ENCODE measurements at regions of chr1 and their contacts with region 1.

Region 1: GRCh38 chr1:31955917-31956736 is 18.0 kb upstream of the PTP4A2 start:
- DNase-seq: peak; percentile 44
- ATAC-seq: peak; percentile 39
- H3K4me3 ChIP-seq: no peak overlapping the region
- H3K27ac ChIP-seq: peak overlapping the region; percentile 51
- H3K4me1 ChIP-seq: peaks cover 23 to 33% of the 10 kb centered on the region in 2 experiments
- H3K27me3 ChIP-seq: no peaks in the 10 kb centered on the region
- CTCF ChIP-seq: no peak
- POLR2A ChIP-seq: no peak
- RAD21 ChIP-seq: peak; percentile 45

Region 2: GRCh38 chr1:31663622-31664452 is 292.3 kb before region 1 on chr1:
- CTCF ChIA-PET with region 1: no interaction called
- POLR2A ChIA-PET with region 1: no interaction called
- RAD21 ChIA-PET with region 1: no interaction called
- intact Hi-C with region 1: loop called (anchors 10 kb)
- DNase-seq: peak; percentile 13
- ATAC-seq: peak; percentile 79
- H3K4me3 ChIP-seq: no peak overlapping the region
- H3K27ac ChIP-seq: no peak overlapping the region
- H3K4me1 ChIP-seq: peaks cover 9 to 12% of the 10 kb centered on the region in 2 experiments
- H3K27me3 ChIP-seq: no peaks in the 10 kb centered on the region
- CTCF ChIP-seq: peak; percentile 90 to 95 (median 93)
- POLR2A ChIP-seq: no peak
- RAD21 ChIP-seq: peak; percentile 98

Region 3: GRCh38 chr1:31904339-31905092 is 51.6 kb before region 1 on chr1:
- CTCF ChIA-PET with region 1: no interaction called
- POLR2A ChIA-PET with region 1: no interaction called
- RAD21 ChIA-PET with region 1: no interaction called
- intact Hi-C with region 1: loop called (anchors 5 kb)
- DNase-seq: no peak
- ATAC-seq: peak; percentile 8; the same call in 1 of the 2 replicates
- H3K4me3 ChIP-seq: no peak overlapping the region
- H3K27ac ChIP-seq: no peak overlapping the region
- H3K4me1 ChIP-seq: no peaks in the 10 kb centered on the region
- H3K27me3 ChIP-seq: no peaks in the 10 kb centered on the region
- CTCF ChIP-seq: no peak
- POLR2A ChIP-seq: no peak
- RAD21 ChIP-seq: no peak

Region 4: GRCh38 chr1:31923901-31924535 is 32.1 kb before region 1 on chr1:
- CTCF ChIA-PET with region 1: no interaction called
- POLR2A ChIA-PET with region 1: no interaction called
- RAD21 ChIA-PET with region 1: no interaction called
- intact Hi-C with region 1: loop called (anchors 5 kb)
- DNase-seq: no peak
- ATAC-seq: no peak
- H3K4me3 ChIP-seq: no peak overlapping the region
- H3K27ac ChIP-seq: no peak overlapping the region; the same call in 1 of the 2 replicates
- H3K4me1 ChIP-seq: peaks cover 47 to 67% of the 10 kb centered on the region in 2 experiments
- H3K27me3 ChIP-seq: no peaks in the 10 kb centered on the region
- CTCF ChIP-seq: no peak
- POLR2A ChIP-seq: no peak
- RAD21 ChIP-seq: no peak

Region 5: GRCh38 chr1:31938174-31938950 is 17.8 kb before region 1 on chr1 and contains the start of gene PTP4A2:
- CTCF ChIA-PET with region 1: interaction called, 7 read pairs
- POLR2A ChIA-PET with region 1: interaction called, 41 read pairs
- RAD21 ChIA-PET with region 1: no interaction called
- intact Hi-C with region 1: no loop called
- DNase-seq: peak; percentile 96
- ATAC-seq: peak; percentile 82
- H3K4me3 ChIP-seq: peak within 1 kb of the TSS; percentile 92 to 97
- H3K27ac ChIP-seq: peak within 1 kb of the TSS; percentile 95
- H3K4me1 ChIP-seq: peaks cover 62 to 83% of the 10 kb centered on the region in 2 experiments
- H3K27me3 ChIP-seq: no peaks in the 10 kb centered on the region
- CTCF ChIP-seq: peak in 1 of 3 experiments; percentile 40; a peak in 3 of 6 replicates
- POLR2A ChIP-seq: peak; percentile 83
- RAD21 ChIP-seq: no peak
- total RNA-seq, gene PTP4A2: 267 TPM

Region 6: DNA sequence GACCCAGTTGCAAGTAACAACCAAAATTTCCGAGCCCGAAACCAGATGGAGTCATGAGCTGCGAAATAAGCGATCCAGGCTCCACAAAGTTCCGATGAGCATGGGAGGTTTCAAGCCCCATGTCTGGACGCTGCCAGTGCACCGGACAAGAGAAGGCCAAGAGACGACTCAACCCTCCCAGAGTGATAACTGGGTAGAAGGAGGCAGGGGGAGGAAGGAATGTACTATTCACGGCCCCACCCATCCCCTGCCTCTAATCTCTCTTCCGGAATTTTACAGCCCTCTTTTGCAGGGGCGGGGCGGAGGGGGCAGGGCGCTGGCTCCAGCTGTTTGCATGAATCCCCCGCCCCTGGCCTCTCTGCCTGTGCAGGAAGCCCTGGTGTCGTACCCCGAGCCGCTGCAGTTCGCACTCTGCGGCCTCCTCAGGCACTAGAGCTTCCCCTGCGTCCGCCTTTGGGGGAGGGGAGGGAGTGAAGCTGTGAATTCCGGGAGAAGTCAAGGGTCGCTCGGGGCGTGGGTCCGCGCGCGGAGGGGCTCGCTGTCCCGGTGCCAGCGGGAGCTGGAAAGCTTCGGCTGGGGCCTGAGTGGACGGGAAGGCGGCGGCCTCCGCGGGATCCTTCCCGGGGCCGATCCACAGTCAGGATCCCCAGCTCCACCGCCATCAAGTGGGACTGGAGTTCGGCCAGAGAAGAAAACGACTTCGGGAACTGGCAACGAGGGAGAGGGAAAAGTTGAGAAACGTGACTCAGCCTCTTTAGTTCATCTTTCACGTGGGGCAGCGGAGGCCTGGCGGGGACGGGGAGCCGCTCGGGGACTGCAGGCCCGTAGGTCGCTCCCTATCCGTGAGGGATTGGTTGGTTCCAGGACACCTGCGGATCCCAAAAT is 11.7 kb before region 1 on chr1:
- CTCF ChIA-PET with region 1: interaction called, 3 read pairs
- POLR2A ChIA-PET with region 1: interaction called, 41 read pairs
- RAD21 ChIA-PET with region 1: interaction called in 1 of 2 experiments, 3 read pairs
- intact Hi-C with region 1: no loop called
- DNase-seq: peak; percentile 66
- ATAC-seq: peak; percentile 74
- H3K4me3 ChIP-seq: peak overlapping the region; percentile 45 to 60
- H3K27ac ChIP-seq: peak overlapping the region; percentile 83
- H3K4me1 ChIP-seq: peaks cover 43 to 58% of the 10 kb centered on the region in 2 experiments
- H3K27me3 ChIP-seq: no peaks in the 10 kb centered on the region
- CTCF ChIP-seq: no peak
- POLR2A ChIP-seq: peak; percentile 75
- RAD21 ChIP-seq: no peak

Region 7: DNA sequence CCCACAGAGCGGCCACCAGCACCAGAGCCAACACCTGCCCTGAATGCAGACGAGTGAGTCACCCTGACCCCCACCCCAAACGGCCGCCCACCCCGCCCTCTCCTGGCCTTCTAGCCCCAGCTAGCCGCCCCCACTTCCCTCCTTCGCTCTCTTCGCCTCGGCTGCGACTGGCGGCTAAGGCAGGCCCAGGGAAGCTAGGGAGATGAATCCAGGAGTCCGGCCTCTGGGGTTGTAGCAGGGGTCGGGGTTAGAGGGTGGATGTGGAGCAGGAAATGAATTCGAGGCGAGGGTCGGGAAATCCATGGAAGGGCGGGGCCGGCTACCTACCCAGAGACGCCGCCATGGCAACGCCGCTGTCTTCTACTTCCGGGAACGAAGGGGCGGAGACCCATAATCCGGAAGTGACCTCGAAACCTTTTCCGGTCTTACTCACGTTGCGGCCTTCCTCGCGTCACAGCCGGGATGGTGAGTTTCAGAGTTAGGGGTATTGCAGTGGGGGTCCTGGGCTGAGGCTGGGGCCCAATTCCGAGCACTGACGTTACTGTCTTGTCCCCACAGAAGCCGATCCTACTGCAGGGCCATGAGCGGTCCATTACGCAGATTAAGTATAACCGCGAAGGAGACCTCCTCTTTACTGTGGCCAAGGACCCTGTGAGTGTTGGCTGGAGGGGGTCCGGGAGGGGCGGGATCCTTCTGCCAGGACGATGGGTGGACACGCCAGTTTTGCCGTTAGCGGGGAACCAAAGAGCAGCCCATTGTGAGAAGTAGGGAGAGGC is 266.0 kb after region 1 on chr1 and contains the starts of genes EIF3I and TMEM234:
- CTCF ChIA-PET with region 1: no interaction called
- POLR2A ChIA-PET with region 1: no interaction called
- RAD21 ChIA-PET with region 1: no interaction called
- intact Hi-C with region 1: no loop called
- DNase-seq: peak; percentile 85
- ATAC-seq: peak; percentile 87
- H3K4me3 ChIP-seq: peak within 1 kb of the TSS; percentile 96 to 99
- H3K27ac ChIP-seq: peak within 1 kb of the TSS; percentile 68
- H3K4me1 ChIP-seq: peaks cover 15 to 35% of the 10 kb centered on the region in 2 experiments
- H3K27me3 ChIP-seq: no peaks in the 10 kb centered on the region
- CTCF ChIP-seq: no peak
- POLR2A ChIP-seq: peak; percentile 68
- RAD21 ChIP-seq: no peak
- total RNA-seq, gene EIF3I: 323 TPM
- total RNA-seq, gene TMEM234: 12.3 TPM

Measured in HCT116 (cell line).